ENCODE measurements at regions of chr19 and their contacts with region 1.

Region 1: GRCh38 chr19:43950834-43951645 is at the start of gene ZNF221:
- DNase-seq: peak; percentile 75 to 96 (median 90)

Region 2: GRCh38 chr19:43901395-43902390 is 49.3 kb before region 1 on chr19:
- intact Hi-C with region 1: loop called (anchors 5 kb)
- DNase-seq: peak; percentile 71 to 94 (median 86)

Region 3: GRCh38 chr19:43934985-43935708 is 15.9 kb before region 1 on chr19 and contains the start of gene ZNF45:
- intact Hi-C with region 1: loop called (anchors 2 kb)
- DNase-seq: peak; percentile 88 to 98 (median 94)

Region 4: GRCh38 chr19:44021221-44021620 is 70.2 kb after region 1 on chr19:
- intact Hi-C with region 1: no loop called
- DNase-seq: no peak

Measured in head of caudate nucleus (tissue), 42 donors.